Colonic mucosa (tissue), 4 donors: ENCODE measurements at regions of chr17 and their contacts with region 1.

Region 1: DNA sequence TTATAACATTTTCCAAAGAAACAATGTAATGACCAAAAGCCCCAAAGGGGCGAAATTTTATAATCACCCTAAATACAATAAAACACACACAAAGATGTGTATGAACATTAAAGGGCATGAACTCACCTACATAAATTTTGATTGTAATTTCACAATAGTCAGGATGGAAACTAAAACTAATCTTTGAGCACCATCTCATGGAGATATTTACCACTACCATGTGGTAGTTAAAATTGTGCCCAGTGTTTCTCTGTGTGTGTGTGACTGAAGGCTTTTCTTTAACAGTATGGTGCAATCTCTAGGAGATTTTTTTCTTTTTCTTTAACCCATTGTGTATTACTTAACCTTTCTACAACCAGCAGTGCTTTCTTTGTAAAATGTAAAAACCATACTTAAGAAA is 19.7 kb upstream of the MEIOC start:
- DNase-seq: no peak
- H3K4me3 ChIP-seq: no peak overlapping the region
- H3K27ac ChIP-seq: no peak overlapping the region
- H3K4me1 ChIP-seq: no peaks in the 10 kb centered on the region
- H3K27me3 ChIP-seq: no peaks in the 10 kb centered on the region
- CTCF ChIP-seq: peak; percentile 22

Region 2: DNA sequence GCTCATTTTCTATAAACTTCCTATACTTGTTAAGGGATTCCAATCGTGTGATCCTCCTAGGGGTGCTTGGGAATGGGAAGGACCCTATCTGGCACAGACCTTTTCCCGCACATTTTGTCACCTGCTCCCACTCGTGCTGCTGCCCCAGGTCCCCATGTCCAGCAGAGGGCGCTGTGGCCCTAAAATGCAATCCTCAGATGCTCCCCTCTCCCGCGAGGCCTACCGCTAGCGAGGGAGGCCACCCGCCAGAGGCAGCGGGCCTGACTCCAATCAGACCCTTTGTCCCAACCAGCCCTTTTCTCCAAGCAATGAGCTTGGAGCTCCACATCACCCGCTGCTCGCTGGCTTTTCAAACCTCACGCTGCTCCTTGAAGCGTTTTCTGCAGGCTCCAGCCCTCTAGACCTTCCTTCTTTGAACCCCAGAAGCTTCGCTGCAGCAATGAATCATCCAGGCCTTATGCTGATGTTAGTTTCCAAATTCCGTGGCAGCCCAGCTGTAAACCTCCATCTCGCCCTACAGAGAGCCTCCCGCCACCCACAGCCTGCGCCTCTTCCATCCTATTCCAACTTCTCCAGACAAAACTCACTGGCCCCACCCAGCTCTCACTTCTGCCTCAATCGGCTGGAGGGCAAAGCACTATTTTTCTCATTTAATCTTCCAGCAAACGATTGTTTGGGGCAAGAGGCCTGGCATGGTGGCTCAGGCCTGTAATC is 102.9 kb before region 1 on chr17:
- intact Hi-C with region 1: loop called (anchors 5 kb)
- DNase-seq: peak; percentile 86
- H3K4me3 ChIP-seq: no peak overlapping the region
- H3K27ac ChIP-seq: peak overlapping the region; percentile 28
- H3K4me1 ChIP-seq: no peaks in the 10 kb centered on the region
- H3K27me3 ChIP-seq: no peaks in the 10 kb centered on the region
- CTCF ChIP-seq: peak; percentile 96

Region 3: GRCh38 chr17:44587339-44587738 is 49.2 kb before region 1 on chr17:
- intact Hi-C with region 1: loop called (anchors 10 kb)
- DNase-seq: no peak
- H3K4me3 ChIP-seq: no peak overlapping the region
- H3K27ac ChIP-seq: no peak overlapping the region
- H3K4me1 ChIP-seq: no peaks in the 10 kb centered on the region
- H3K27me3 ChIP-seq: no peaks in the 10 kb centered on the region
- CTCF ChIP-seq: no peak

Region 4: DNA sequence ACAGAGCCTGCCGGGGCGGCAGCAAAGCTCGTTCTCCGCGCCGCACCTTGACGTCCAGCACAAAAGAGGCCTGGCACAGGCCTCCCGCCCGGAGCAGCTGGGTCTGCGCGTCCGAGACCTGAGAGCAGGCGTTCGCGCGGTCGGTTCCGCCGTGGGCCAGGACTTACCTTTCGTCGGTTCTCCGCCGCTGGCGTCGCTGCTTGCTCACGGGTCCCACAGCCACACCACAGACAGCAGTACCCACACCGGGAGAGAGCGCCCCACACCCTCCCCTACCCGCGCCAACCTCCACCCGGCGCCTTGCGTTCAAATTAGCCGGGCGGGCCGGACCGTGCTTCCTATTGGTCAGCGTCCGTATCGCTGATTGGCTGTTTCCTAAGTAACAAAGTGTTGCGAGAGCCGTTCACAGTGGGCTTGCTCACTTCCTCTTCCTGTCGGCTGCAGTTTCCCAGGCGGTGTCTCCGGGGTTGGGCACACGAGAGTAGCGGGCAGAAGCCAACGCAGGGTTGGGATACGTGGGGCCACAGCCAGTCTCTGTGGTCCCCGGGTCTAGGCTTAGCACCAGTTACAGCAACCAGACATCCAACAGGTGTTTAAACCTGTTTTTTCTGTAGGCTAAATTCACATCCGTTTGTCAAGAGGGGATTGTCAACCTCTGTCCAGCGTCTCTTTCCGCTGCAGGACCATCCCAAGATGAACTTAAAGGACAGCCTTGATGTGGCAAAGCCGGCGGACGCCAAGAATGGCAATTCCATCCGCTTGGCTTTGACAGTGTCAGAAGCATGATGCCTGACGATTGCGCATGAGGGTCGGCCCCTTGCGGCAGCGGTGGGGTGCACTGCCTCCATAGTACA is 311.1 kb after region 1 on chr17 and contains the start of gene KIF18B:
- intact Hi-C with region 1: no loop called
- DNase-seq: peak; percentile 95
- H3K4me3 ChIP-seq: peak within 1 kb of the TSS; percentile 78
- H3K27ac ChIP-seq: no peak within 1 kb of the TSS
- H3K4me1 ChIP-seq: no peaks in the 10 kb centered on the region
- H3K27me3 ChIP-seq: no peaks in the 10 kb centered on the region
- CTCF ChIP-seq: no peak
- total RNA-seq, gene KIF18B: 5.7 to 45.5 TPM